Endothelial cell of umbilical vein (primary cell): ENCODE measurements at regions of chr20 and their contacts with region 1.

Region 1: DNA sequence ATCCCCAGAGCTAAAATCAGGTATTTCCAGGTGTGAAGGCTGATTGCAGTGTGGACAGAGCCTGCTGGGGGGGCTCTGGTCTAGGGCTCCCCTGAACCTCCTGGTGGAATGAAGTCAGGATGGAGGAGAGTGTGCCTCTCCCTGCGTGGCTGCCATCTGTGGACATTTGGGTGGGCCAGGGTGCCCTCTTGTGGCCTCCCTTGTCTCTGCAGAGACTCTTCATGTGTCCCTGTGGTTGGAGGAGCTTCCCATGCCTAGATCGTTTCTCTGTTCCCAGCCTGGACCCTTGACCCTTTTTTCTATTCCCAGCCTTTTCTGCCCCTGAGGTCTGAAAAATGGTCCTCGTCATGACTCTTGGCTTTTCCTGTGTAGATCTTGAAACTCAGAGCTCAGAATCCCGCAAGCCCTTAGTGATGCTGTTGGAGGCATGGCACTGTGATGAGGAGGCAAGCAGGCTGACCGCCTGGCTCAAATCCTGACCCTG is 9.9 kb upstream of the PSMF1 start:
- DNase-seq: peak; percentile 35
- H3K4me3 ChIP-seq: no peak overlapping the region
- H3K27ac ChIP-seq: no peak overlapping the region
- H3K4me1 ChIP-seq: no peaks in the 10 kb centered on the region
- H3K27me3 ChIP-seq: peaks cover 9 to 11% of the 10 kb centered on the region in 2 experiments
- CTCF ChIP-seq: peak; percentile 71 to 90
- POLR2A ChIP-seq: no peak

Region 2: DNA sequence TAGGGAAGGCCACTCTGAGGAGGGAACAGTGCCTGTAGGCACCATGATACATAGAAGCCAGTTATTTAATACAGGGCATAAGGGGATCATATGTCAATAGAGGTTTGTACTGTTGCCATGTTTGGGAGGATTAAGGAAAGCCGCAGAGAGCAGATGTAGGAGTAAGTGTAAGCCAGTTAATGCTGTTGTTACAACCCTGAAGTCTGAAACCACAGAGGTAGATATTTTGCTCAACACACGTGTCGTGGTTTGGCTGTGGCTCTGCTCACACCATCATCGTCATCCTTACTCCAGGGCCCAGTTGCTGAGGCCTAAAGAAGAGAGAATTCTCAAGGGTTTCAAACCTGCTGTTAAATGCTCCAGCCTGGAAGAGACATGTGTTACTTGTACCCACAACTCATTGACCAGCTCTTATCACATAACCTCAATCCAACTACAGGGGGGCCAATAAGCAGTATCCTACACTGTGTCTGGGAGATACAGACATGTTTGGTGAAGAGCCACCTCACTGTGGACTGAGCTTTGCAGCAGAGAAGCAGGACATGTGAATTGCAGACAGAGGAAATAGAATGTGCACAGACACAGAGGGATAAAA is 21.1 kb before region 1 on chr20:
- CTCF ChIA-PET with region 1: interaction called, 12 read pairs
- POLR2A ChIA-PET with region 1: no interaction called
- dilution Hi-C with region 1: no loop called
- intact Hi-C with region 1: no loop called
- DNase-seq: no peak
- H3K4me3 ChIP-seq: no peak overlapping the region
- H3K27ac ChIP-seq: no peak overlapping the region
- H3K4me1 ChIP-seq: no peaks in the 10 kb centered on the region
- H3K27me3 ChIP-seq: peaks cover 2% of the 10 kb centered on the region in 2 experiments
- CTCF ChIP-seq: no peak
- POLR2A ChIP-seq: no peak

Region 3: DNA sequence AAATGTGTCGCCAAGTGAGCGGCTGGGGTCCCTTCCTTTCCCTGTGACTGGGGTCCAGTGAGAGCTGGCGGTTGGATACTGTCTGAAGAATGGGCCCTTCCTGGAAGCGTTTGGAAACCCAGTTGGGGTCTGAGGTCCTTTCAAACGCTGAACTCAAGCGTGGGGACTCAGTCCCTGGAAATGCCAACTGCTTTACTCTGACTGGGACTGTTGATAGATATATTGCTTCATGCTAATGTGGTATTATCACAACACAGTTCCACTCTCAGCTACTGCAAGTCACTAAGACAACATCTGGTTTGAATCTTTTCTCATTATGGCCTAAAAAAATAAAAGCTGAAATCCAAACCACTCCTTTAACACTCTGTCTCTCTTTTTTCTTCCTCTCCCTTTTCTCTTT is 13.7 kb before region 1 on chr20:
- CTCF ChIA-PET with region 1: interaction called, 36 read pairs
- POLR2A ChIA-PET with region 1: no interaction called
- dilution Hi-C with region 1: no loop called
- intact Hi-C with region 1: no loop called
- DNase-seq: no peak
- H3K4me3 ChIP-seq: no peak overlapping the region
- H3K27ac ChIP-seq: no peak overlapping the region
- H3K4me1 ChIP-seq: no peaks in the 10 kb centered on the region
- H3K27me3 ChIP-seq: peaks cover 0 to 3% of the 10 kb centered on the region in 2 experiments
- CTCF ChIP-seq: no peak
- POLR2A ChIP-seq: no peak

Region 4: DNA sequence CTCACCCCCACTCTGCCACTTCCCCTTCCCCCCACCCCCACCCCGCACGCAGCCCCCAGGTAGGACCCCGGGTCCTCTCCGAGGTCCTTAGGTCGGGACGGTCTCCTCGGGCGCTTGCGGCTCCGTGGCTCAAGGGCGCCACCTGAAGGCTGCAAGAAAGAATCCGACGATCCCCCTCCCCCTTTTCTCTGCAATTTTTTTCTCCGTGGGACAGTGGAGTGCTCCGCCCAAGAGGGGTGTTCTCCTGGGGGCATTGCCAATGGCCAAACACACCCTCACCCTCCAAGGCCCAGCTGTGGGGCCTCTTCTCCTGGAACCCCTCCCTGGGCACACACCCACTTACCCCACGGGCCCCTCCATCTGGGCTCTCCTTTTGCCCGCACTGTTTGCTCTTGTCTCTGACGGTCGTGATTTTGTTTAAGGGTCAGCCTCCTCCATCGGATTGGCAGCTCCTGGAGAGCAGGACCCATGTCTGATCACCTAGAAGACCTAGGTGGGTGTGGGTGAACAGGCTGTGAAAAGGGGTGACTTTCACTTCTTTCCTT is 77.4 kb after region 1 on chr20:
- CTCF ChIA-PET with region 1: interaction called, 4 read pairs
- POLR2A ChIA-PET with region 1: no interaction called
- dilution Hi-C with region 1: no loop called
- intact Hi-C with region 1: loop called (anchors 2 kb)
- DNase-seq: peak; percentile 48
- H3K4me3 ChIP-seq: peak overlapping the region in 1 of 3 experiments; percentile 45
- H3K27ac ChIP-seq: no peak overlapping the region
- H3K4me1 ChIP-seq: no peaks in the 10 kb centered on the region
- H3K27me3 ChIP-seq: peaks cover 14 to 31% of the 10 kb centered on the region in 2 experiments
- CTCF ChIP-seq: peak; percentile 50 to 78
- POLR2A ChIP-seq: no peak

Region 5: GRCh38 chr20:1212607-1213396 is 104.3 kb after region 1 on chr20:
- CTCF ChIA-PET with region 1: interaction called, 12 read pairs
- POLR2A ChIA-PET with region 1: no interaction called
- dilution Hi-C with region 1: no loop called
- intact Hi-C with region 1: loop called (anchors 2 kb)
- DNase-seq: peak; percentile 63
- H3K4me3 ChIP-seq: no peak overlapping the region
- H3K27ac ChIP-seq: no peak overlapping the region
- H3K4me1 ChIP-seq: no peaks in the 10 kb centered on the region
- H3K27me3 ChIP-seq: peaks cover 8 to 39% of the 10 kb centered on the region in 2 experiments
- CTCF ChIP-seq: peak; percentile 81 to 91
- POLR2A ChIP-seq: no peak